Naive thymus-derived CD4-positive, alpha-beta T cell (primary cell): ENCODE measurements at regions of chr3 and their contacts with region 1.

Region 1: DNA sequence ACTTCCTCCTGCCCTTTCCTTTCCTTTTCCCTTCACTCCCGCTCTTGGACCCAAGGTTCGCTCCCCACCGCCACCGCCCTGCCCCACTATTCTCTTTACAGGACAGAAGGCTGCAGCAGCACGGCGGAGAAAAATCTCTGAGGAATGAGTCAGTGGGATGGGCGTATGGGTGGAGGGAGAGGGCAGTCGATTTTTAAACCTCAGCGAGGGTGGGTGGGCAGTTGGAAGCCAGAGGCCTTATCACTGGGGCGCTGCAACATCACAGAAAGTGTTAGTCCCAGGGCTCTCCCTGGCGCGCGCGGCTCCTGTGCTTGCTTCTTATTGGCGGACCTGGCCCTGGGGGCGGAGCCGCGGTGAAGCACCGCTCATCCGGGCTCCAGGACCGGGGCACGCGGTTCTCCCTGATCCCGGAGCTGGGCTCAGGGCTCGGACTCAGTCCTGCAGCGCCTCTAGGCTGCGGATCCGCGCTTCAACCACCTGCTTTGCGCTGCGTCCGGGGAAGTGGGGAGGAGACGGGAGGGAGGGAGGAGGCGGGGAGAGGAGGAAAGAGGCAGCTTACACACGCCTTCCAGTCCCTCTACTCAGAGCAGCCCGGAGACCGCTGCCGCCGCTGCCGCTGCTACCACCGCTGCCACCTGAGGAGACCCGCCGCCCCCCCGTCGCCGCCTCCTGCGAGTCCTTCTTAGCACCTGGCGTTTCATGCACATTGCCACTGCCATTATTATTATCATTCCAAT is at the start of gene ALCAM:
- DNase-seq: peak; percentile 66 to 85 (median 73)
- ATAC-seq: peak; percentile 72
- H3K4me3 ChIP-seq: peak within 1 kb of the TSS; percentile 81
- H3K4me3 Mint-ChIP-seq: peak within 1 kb of the TSS; percentile 90 to 97 (median 92)
- H3K27ac ChIP-seq: peak within 1 kb of the TSS; percentile 70
- H3K27ac Mint-ChIP-seq: peak within 1 kb of the TSS; percentile 82 to 99 (median 94)
- H3K4me1 ChIP-seq: peaks cover 3 to 10% of the 10 kb centered on the region in 2 donors
- H3K4me1 Mint-ChIP-seq: peaks cover 22 to 40% (median 29%) of the 10 kb centered on the region in 7 donors
- H3K27me3 ChIP-seq: no peaks in the 10 kb centered on the region
- H3K27me3 Mint-ChIP-seq: peaks cover 14 to 32% (median 24%) of the 10 kb centered on the region in 5 donors
- total RNA-seq, gene ALCAM: 3.4 to 10.3 (median 4.4) TPM

Region 2: DNA sequence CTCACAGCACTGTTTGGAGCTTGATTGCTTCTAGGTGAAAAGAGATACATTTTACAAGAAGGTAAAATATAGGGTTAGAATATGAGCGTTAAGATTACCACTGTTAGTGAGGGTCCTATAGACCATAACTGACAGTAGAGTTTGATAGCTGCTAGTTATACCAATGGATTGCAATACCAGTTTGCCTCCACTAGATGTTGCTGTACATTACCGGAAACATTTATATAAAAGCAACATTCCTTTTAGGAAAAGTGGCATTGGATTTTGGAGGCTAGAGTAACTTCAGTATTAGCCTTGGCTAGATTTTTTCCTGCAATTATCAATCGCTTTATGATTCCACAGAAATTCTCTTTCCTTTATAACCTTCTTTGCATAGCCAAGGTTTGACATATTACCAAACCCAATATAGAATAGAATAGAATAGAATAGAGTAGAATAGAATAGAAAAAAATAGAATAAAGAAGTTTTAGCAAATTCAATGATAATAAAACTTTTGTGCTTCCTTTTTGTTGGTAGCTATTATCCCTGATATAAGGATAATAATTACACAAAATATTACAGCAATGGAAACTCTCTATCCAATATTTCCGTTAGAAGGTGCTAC is 1093.3 kb before region 1 on chr3:
- CTCF ChIA-PET with region 1: no interaction called
- POLR2A ChIA-PET with region 1: no interaction called
- intact Hi-C with region 1: loop called in 1 of 2 experiments (anchors 2 kb)
- DNase-seq: no peak
- ATAC-seq: no peak
- H3K4me3 ChIP-seq: no peak overlapping the region
- H3K4me3 Mint-ChIP-seq: no peak overlapping the region
- H3K27ac ChIP-seq: no peak overlapping the region
- H3K27ac Mint-ChIP-seq: no peak overlapping the region
- H3K4me1 ChIP-seq: no peaks in the 10 kb centered on the region
- H3K4me1 Mint-ChIP-seq: no peaks in the 10 kb centered on the region
- H3K27me3 ChIP-seq: no peaks in the 10 kb centered on the region
- H3K27me3 Mint-ChIP-seq: peaks cover 0 to 3% (median 0%) of the 10 kb centered on the region in 5 donors

Region 3: DNA sequence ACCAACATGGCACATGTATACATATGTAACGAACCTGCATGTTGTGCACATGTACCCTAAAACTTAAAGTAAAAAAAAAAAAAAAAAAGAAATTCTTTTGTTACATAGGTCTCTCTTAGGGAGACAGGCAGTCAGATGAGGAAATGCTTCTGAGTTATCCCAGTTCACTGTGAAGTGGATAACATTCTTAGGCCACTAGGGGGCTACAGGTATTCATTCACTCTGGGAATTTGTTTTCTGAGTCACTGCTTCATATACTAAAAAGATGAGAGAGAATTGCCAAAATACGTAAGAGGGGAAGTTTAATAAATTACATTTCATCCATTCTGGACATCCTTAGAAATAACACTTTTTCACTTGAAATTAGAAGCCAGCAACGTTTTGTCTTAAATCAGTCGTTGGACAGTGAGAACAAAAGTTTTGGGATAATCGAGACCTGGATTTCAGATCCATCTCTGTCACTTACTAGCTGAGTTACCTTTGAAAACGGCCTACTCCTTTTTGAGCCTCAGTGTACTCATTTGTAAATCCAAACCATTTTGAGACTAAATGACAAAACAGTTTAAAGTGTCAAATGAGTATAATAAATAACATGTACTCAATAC is 738.2 kb before region 1 on chr3:
- CTCF ChIA-PET with region 1: no interaction called
- POLR2A ChIA-PET with region 1: no interaction called
- intact Hi-C with region 1: loop called (anchors 1 kb)
- DNase-seq: peak in 2 of 9 donors; percentile 1 to 2
- ATAC-seq: no peak
- H3K4me3 ChIP-seq: no peak overlapping the region
- H3K4me3 Mint-ChIP-seq: no peak overlapping the region
- H3K27ac ChIP-seq: no peak overlapping the region
- H3K27ac Mint-ChIP-seq: no peak overlapping the region
- H3K4me1 ChIP-seq: no peaks in the 10 kb centered on the region
- H3K4me1 Mint-ChIP-seq: no peaks in the 10 kb centered on the region
- H3K27me3 ChIP-seq: no peaks in the 10 kb centered on the region
- H3K27me3 Mint-ChIP-seq: peaks cover 0 to 4% (median 0%) of the 10 kb centered on the region in 5 donors

Region 4: DNA sequence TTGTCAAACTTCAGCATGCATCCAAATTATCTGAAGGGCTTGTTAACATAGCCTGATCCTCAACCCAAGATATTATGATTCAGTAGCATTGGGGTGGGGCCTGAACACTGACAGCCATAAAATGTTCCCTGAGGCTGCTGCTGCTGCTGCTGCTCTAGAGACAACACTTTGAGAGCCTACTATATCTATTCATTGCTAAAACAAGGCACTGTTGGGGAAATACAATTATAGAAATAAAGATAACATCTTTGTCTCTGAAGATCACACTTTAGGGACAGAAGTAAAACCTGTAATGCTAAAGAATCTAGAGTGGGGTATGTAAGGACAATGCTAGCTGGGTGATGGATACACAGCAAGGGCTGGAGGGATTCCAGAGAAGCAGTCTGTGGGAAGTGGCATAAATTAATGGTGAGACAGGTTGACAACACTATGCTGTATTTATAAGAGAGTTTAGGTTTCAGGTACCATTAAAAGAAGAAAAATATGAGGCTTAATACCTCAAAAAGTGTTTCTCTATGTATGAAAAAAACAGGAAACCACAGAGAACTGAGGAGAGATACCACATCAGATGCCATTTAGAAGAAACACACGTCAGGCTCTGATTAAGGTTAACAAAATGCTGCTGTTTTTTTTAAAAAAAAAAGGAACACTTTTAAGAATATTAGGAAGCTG is 386.4 kb after region 1 on chr3:
- CTCF ChIA-PET with region 1: no interaction called
- POLR2A ChIA-PET with region 1: no interaction called
- intact Hi-C with region 1: loop called (anchors 1 to 5 kb)
- DNase-seq: peak in 7 of 9 donors; percentile 70 to 90 (median 86)
- ATAC-seq: peak; percentile 89
- H3K4me3 ChIP-seq: peak overlapping the region; percentile 20
- H3K4me3 Mint-ChIP-seq: peak overlapping the region; percentile 64 to 85 (median 80)
- H3K27ac ChIP-seq: peak overlapping the region; percentile 71
- H3K27ac Mint-ChIP-seq: peak overlapping the region; percentile 91 to 99 (median 98)
- H3K4me1 ChIP-seq: peaks cover 75 to 87% of the 10 kb centered on the region in 2 donors
- H3K4me1 Mint-ChIP-seq: peaks cover 31 to 96% (median 83%) of the 10 kb centered on the region in 7 donors
- H3K27me3 ChIP-seq: no peaks in the 10 kb centered on the region
- H3K27me3 Mint-ChIP-seq: no peaks in the 10 kb centered on the region

Region 5: DNA sequence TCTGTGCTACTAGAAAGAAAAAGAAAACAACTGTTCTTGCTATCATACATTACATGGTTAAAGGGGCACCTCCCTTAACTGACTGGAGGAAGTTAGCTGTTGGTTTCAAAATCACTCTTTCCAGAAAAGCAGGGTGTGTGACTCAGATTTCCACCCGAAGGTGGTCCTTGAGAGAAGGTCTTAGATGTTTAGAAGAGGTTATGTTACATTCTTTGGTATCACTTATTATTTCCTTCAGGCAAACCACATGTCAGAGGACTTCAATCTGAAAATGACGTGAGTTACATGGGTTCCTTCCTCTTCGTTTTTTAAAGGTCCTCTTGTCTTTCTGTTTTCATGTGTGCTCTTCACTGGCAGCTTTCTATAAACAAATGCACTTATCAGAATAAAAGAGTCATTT is 810.2 kb after region 1 on chr3:
- CTCF ChIA-PET with region 1: no interaction called
- POLR2A ChIA-PET with region 1: no interaction called
- intact Hi-C with region 1: loop called (anchors 2 to 5 kb)
- DNase-seq: peak in 8 of 9 donors; percentile 59 to 86 (median 78)
- ATAC-seq: peak; percentile 94
- H3K4me3 ChIP-seq: peak overlapping the region; percentile 28
- H3K4me3 Mint-ChIP-seq: peak overlapping the region; percentile 1 to 79 (median 73)
- H3K27ac ChIP-seq: peak overlapping the region; percentile 43
- H3K27ac Mint-ChIP-seq: peak overlapping the region; percentile 50 to 91 (median 87)
- H3K4me1 ChIP-seq: peaks cover 28 to 32% of the 10 kb centered on the region in 2 donors
- H3K4me1 Mint-ChIP-seq: peaks cover 33 to 61% (median 56%) of the 10 kb centered on the region in 7 donors
- H3K27me3 ChIP-seq: no peaks in the 10 kb centered on the region
- H3K27me3 Mint-ChIP-seq: no peaks in the 10 kb centered on the region